ENCODE measurements at regions of chr7 and their contacts with region 1.

Region 1: DNA sequence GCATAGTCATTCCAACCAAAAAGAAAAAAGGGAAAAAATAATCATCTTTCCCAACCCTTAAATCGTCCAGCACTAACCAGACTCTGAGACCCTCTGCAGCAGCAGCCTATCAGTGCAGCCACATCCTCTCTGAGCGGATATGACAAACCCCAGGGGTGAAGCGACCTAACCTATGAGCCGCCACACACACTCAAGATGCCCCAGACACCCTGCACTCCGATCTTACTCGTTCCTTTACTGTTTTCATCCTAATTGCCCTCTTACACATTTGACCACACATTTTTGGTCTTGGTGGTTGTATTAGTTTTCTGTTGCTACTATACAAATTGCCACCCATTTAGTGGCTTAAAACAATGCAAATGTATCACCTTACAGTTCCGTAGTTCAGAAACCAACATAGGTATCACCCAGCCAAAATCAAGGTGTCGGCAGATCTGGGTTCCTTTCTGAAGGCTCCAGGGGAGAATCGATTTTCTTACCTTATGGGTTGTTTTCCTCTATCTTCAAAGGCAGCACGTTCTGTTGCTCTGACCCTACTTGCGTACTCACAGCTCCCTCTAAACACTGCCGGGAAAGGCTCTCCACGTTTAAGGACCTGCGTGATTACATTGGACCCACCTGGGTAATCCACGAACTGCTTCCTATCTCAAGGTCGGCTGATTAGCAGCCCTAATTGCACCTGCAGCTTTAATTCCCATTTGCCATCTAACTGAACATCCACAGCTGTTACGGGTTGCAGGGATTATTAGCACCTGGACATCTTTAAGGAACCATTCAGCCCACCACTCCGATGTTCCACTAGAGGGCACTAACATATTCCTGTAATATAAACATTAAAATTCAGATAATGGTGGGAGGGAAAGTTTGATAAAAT is 37.3 kb upstream of the PRSS1 start:
- DNase-seq: peak in 3 of 5 donors; percentile 19 to 45 (median 26)
- H3K4me3 ChIP-seq: peak overlapping the region in 1 of 2 donors; percentile 53
- H3K4me3 Mint-ChIP-seq: peak overlapping the region; percentile 87 to 94 (median 89)
- H3K27ac ChIP-seq: peak overlapping the region; percentile 35
- H3K27ac Mint-ChIP-seq: peak overlapping the region; percentile 85 to 95 (median 93)
- H3K4me1 ChIP-seq: peaks cover 78% of the 10 kb centered on the region
- H3K4me1 Mint-ChIP-seq: peaks cover 32 to 80% (median 62%) of the 10 kb centered on the region in 4 donors
- H3K27me3 ChIP-seq: no peaks in the 10 kb centered on the region
- H3K27me3 Mint-ChIP-seq: no peaks in the 10 kb centered on the region

Region 2: DNA sequence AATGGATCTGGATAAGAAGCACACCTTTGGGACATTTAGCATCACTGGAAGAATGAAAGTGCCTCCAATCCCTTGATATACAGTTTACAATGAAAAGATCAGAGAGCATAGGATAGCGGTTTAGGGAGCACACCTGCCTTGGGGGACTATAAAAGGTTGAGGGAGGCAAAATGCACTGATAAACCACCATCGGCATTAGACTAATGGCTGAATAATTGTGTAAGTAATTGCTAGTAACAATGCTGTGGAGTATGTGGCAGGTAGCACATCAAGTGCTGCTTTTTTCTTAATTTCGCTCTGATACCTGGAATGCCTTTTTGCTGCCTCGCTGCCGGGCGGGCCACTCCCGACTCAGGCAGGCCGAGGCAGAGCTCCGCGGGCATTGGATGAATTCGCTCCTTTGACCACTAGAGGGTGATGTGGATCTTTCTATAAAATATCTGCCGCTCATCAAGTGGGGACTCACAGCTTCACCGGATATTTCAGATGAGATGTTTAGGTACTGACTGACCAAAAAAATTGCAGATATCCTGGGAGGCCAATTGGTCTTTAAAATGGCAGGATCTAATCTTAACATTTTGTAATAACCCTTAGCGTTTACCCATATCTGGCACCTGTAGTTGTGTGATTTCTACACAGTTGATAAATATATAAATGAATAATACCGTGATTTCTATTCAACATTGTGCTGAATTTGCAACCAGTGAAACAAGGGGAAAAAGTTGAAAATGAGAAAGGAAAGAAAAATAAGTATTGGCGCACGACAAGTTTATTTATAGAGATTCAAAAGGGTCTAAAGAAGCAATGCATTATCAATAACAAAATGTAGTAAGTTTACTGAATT is 79.5 kb before region 1 on chr7:
- CTCF ChIA-PET with region 1: interaction called, 3 read pairs
- POLR2A ChIA-PET with region 1: interaction called, 4 read pairs
- intact Hi-C with region 1: loop called (anchors 10 kb)
- DNase-seq: peak; percentile 47 to 68 (median 67)
- H3K4me3 ChIP-seq: no peak overlapping the region
- H3K4me3 Mint-ChIP-seq: peak overlapping the region in 4 of 8 donors; percentile 15 to 51 (median 34)
- H3K27ac ChIP-seq: no peak overlapping the region
- H3K27ac Mint-ChIP-seq: peak overlapping the region in 4 of 7 donors; percentile 35 to 82 (median 72)
- H3K4me1 ChIP-seq: peaks cover 3% of the 10 kb centered on the region
- H3K4me1 Mint-ChIP-seq: peaks cover 3 to 15% (median 8%) of the 10 kb centered on the region in 4 donors
- H3K27me3 ChIP-seq: no peaks in the 10 kb centered on the region
- H3K27me3 Mint-ChIP-seq: peaks cover 1% of the 10 kb centered on the region in 2 donors

Region 3: DNA sequence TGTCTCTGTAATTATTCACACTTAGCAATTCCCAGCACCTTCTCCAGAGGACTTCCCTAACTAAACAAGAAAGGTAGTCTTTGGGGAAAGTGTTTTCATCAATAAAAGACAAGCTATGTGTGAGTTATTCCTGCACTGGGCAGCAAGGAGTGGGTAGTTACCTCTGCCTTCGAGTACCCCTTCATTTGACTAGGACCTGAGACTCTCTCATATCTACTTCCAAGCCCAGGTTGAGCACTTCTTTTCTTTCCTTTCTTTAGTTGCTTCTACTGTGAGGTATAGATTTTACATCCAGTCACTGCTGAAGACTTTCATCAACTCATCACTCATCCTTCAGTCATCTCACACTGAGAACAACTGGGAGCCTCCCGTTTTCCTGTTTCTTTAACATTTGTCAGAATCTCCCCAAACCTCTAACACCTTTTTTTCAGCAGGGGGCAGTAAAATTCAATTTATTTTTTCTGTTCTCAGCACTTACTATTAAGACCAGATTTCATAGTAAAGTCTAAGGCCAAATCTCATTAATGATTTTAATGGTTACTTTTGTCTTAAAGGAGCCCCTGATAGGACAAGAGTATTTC is 42.8 kb before region 1 on chr7:
- CTCF ChIA-PET with region 1: interaction called, 7 read pairs
- POLR2A ChIA-PET with region 1: interaction called, 4 read pairs
- intact Hi-C with region 1: loop called (anchors 5 kb)
- DNase-seq: peak in 4 of 5 donors; percentile 19 to 43 (median 30)
- H3K4me3 ChIP-seq: no peak overlapping the region
- H3K4me3 Mint-ChIP-seq: peak overlapping the region in 4 of 8 donors; percentile 0 to 67 (median 26)
- H3K27ac ChIP-seq: no peak overlapping the region
- H3K27ac Mint-ChIP-seq: peak overlapping the region in 5 of 7 donors; percentile 39 to 86 (median 70)
- H3K4me1 ChIP-seq: peaks cover 25% of the 10 kb centered on the region
- H3K4me1 Mint-ChIP-seq: peaks cover 19 to 30% (median 25%) of the 10 kb centered on the region in 4 donors
- H3K27me3 ChIP-seq: no peaks in the 10 kb centered on the region
- H3K27me3 Mint-ChIP-seq: no peaks in the 10 kb centered on the region

Region 4: DNA sequence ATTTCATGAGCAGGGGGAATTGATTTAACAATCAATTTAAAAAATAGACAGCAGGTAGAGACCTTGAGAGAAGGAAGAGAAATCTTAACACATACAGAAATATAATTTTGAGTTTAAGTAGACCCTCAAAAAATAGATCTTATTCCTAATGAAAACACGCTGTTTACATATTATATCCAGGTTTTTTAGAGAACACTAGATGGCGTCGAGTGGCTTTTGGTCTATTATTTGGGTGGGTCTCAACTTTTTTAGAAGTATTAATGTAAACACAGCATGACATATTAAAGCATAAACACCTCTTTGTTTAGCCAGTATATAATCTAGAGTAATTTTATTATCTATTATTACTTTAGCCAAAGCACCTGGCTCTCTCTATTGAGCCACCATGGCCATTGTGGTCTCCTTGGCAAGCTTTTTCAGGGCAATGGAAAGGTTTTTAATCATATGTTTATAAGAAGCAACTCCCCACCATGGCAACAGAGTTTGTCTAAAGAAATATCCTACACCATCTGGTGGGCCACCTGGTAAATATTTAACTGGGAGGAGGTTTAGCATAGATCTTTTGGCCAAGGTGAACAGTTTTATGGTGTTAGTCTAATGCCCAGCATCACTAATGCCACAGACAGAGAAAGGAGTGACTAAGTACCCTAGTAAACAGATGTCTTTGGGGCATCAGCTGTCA is 22.4 kb before region 1 on chr7:
- CTCF ChIA-PET with region 1: interaction called, 10 read pairs
- POLR2A ChIA-PET with region 1: interaction called, 5 read pairs
- intact Hi-C with region 1: no loop called
- DNase-seq: no peak
- H3K4me3 ChIP-seq: no peak overlapping the region
- H3K4me3 Mint-ChIP-seq: no peak overlapping the region
- H3K27ac ChIP-seq: no peak overlapping the region
- H3K27ac Mint-ChIP-seq: peak overlapping the region in 3 of 7 donors; percentile 24 to 89 (median 77)
- H3K4me1 ChIP-seq: peaks cover 22% of the 10 kb centered on the region
- H3K4me1 Mint-ChIP-seq: peaks cover 16 to 40% (median 26%) of the 10 kb centered on the region in 4 donors
- H3K27me3 ChIP-seq: no peaks in the 10 kb centered on the region
- H3K27me3 Mint-ChIP-seq: no peaks in the 10 kb centered on the region

Measured in CD4-positive, alpha-beta memory T cell (primary cell).